ENCODE measurements at regions of chr4 and their contacts with region 1.

Region 1: GRCh38 chr4:169619959-169620879 is at the start of gene CLCN3:
- DNase-seq: peak; percentile 98
- H3K4me3 ChIP-seq: peak within 1 kb of the TSS; percentile 75
- H3K27ac ChIP-seq: peak within 1 kb of the TSS; percentile 93
- H3K4me1 ChIP-seq: peaks cover 34% of the 10 kb centered on the region
- CTCF ChIP-seq: no peak
- total RNA-seq, gene CLCN3: 17.8 and 23.0 TPM in 2 replicates

Region 2: GRCh38 chr4:169059306-169060211 is 560.7 kb before region 1 on chr4:
- CTCF ChIA-PET with region 1: no interaction called
- POLR2A ChIA-PET with region 1: no interaction called
- intact Hi-C with region 1: no loop called
- DNase-seq: no peak
- H3K4me3 ChIP-seq: no peak overlapping the region
- H3K27ac ChIP-seq: no peak overlapping the region
- H3K4me1 ChIP-seq: no peaks in the 10 kb centered on the region
- CTCF ChIP-seq: no peak

Region 3: GRCh38 chr4:169485791-169486742 is 134.2 kb before region 1 on chr4:
- CTCF ChIA-PET with region 1: no interaction called
- POLR2A ChIA-PET with region 1: no interaction called
- intact Hi-C with region 1: no loop called
- DNase-seq: peak; percentile 33
- H3K4me3 ChIP-seq: no peak overlapping the region
- H3K27ac ChIP-seq: no peak overlapping the region
- H3K4me1 ChIP-seq: no peaks in the 10 kb centered on the region
- CTCF ChIP-seq: peak; percentile 80

Region 4: DNA sequence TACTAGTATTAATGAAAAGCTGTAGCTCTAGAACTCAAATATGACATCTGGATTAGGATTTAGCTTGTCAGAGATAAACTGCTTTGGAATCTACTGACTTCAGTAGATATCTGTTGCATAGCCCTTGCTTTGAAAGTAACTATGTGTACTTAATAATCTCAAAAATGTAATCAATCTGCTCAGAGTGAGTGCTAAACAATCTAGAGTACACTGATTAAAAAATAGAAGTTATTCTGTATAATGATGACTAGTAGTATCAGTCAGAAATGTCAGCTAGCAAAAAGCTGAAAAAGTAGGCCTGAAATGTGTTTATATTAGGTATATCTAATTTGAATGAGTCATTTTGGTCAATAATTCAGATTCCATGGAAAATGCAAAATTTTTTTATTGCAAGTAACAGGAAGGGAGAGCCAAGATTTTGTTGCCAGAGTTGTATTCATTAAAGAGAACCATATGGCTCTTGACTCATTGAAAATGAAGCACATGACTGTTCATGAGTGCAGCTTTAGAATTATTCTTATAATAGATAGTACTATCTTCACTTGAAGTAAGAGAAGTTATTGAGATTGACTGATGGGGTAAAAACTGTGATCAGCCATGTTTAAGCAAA is 20.1 kb after region 1 on chr4:
- CTCF ChIA-PET with region 1: no interaction called
- POLR2A ChIA-PET with region 1: no interaction called
- intact Hi-C with region 1: no loop called
- DNase-seq: no peak
- H3K4me3 ChIP-seq: no peak overlapping the region
- H3K27ac ChIP-seq: no peak overlapping the region
- H3K4me1 ChIP-seq: no peaks in the 10 kb centered on the region
- CTCF ChIP-seq: no peak

Region 5: DNA sequence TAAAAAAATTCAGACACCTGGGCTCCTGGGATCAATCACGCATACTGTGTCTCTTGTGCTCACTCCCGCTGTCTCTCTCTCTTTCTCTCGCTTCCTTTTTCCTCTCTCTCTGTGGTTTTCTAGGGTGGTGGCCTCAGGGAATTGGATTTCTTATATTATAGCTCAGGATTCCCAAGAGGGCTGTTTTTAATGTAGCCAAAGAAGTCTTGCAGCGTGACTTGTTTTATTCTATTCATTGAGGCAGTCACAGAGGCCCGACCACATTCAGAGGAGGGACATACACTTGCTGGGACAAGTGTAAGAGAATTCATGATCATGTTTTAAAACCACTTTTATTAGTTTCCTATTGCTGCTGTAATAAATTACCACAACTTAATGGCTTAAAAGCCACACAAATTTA is 78.1 kb after region 1 on chr4:
- CTCF ChIA-PET with region 1: no interaction called
- POLR2A ChIA-PET with region 1: no interaction called
- intact Hi-C with region 1: no loop called
- DNase-seq: no peak
- H3K4me3 ChIP-seq: no peak overlapping the region
- H3K27ac ChIP-seq: no peak overlapping the region
- H3K4me1 ChIP-seq: no peaks in the 10 kb centered on the region
- CTCF ChIP-seq: no peak

Region 6: GRCh38 chr4:169723207-169723965 is 103.2 kb after region 1 on chr4:
- CTCF ChIA-PET with region 1: no interaction called
- POLR2A ChIA-PET with region 1: interaction called, 6 read pairs
- intact Hi-C with region 1: loop called (anchors 10 kb)
- DNase-seq: peak; percentile 30
- H3K4me3 ChIP-seq: no peak overlapping the region
- H3K27ac ChIP-seq: no peak overlapping the region
- H3K4me1 ChIP-seq: no peaks in the 10 kb centered on the region
- CTCF ChIP-seq: peak; percentile 72

Measured in OCI-LY7 (cell line).